Activated CD4-positive, alpha-beta T cell treated with anti-CD3 and anti-CD28 coated beads for 36 hours (primary cell): ENCODE measurements at regions of chr10 and their contacts with region 1.

Region 1: DNA sequence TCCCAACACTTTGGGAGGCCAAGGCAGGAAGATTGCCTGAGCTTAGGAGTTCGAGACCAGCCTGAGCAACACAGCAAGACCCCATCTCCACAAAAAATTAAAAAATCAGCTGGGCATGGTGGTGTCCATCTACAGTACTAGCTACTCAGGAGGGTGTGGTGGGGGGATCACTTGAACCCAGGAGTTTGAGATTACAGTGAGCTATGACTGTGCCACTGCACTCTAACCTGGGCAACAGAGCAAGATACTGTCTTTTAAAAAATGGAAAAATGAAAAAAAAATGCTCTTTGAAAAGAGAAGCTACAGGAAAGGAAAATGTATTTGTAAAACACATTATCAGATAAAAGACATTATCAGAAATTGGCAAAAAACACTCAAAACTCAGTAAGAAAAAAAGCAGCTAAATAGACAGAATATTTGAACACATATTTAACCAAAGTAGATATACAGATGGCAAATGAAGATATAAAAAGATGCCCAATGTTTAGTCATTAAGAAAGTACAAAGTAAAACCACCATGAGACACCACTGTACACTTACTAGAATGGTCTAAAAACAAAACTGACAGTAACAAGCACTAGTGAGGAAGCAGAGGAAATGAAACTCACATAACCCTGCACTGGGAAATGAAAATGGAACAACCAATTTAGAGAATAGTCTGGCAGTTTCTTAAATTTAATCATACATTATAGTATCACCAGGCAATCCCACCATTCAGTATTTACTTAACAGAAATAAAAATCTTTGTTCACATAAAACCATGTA is 40.5 kb downstream of the NRBF2 start:
- DNase-seq: no peak
- ATAC-seq: peak; percentile 96
- H3K4me3 Mint-ChIP-seq: no peak overlapping the region
- H3K27ac Mint-ChIP-seq: peak overlapping the region; percentile 72
- H3K4me1 Mint-ChIP-seq: peaks cover 52% of the 10 kb centered on the region
- H3K27me3 Mint-ChIP-seq: no peaks in the 10 kb centered on the region

Region 2: DNA sequence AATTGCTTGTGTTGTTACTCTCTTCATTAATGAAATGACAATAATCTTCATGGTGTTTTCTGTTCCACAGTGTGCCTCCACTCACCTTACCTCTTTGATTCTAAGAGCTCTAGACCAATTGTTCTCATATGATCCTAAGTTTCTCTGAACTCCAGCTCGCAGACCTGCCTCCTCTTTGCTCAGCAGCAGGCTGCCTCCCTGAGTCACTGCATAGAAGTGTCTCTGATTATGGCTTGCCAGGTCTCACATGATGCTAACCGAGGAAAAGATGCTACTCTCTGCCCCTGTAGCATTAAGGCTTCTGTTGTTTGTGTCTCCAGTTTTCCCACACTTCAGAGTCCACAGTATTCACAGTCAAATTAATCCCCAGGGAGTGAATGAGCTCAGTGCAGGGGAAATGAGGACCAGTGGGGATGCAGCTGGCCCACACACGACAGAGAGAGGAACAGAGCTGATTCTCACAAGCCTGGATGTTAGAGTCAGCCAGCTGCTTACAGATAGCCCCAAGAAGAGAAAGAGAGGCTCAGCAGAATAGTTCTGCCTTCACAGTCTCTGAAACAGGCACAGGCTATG is 211.6 kb before region 1 on chr10:
- CTCF ChIA-PET with region 1: no interaction called
- POLR2A ChIA-PET with region 1: no interaction called
- intact Hi-C with region 1: no loop called
- DNase-seq: no peak
- ATAC-seq: no peak
- H3K4me3 Mint-ChIP-seq: no peak overlapping the region
- H3K27ac Mint-ChIP-seq: no peak overlapping the region
- H3K4me1 Mint-ChIP-seq: no peaks in the 10 kb centered on the region
- H3K27me3 Mint-ChIP-seq: peaks cover 22% of the 10 kb centered on the region

Region 3: GRCh38 chr10:63133056-63133820 is 40.4 kb before region 1 on chr10 and contains the start of gene NRBF2:
- CTCF ChIA-PET with region 1: interaction called, 4 read pairs
- POLR2A ChIA-PET with region 1: no interaction called
- intact Hi-C with region 1: loop called in 1 of 2 experiments (anchors 2 kb)
- DNase-seq: peak; percentile 99
- ATAC-seq: peak; percentile 90
- H3K4me3 Mint-ChIP-seq: peak within 1 kb of the TSS; percentile 81
- H3K27ac Mint-ChIP-seq: peak within 1 kb of the TSS; percentile 92
- H3K4me1 Mint-ChIP-seq: peaks cover 46% of the 10 kb centered on the region
- H3K27me3 Mint-ChIP-seq: no peaks in the 10 kb centered on the region
- total RNA-seq, gene NRBF2: 23.9 to 24.1 TPM

Region 4: DNA sequence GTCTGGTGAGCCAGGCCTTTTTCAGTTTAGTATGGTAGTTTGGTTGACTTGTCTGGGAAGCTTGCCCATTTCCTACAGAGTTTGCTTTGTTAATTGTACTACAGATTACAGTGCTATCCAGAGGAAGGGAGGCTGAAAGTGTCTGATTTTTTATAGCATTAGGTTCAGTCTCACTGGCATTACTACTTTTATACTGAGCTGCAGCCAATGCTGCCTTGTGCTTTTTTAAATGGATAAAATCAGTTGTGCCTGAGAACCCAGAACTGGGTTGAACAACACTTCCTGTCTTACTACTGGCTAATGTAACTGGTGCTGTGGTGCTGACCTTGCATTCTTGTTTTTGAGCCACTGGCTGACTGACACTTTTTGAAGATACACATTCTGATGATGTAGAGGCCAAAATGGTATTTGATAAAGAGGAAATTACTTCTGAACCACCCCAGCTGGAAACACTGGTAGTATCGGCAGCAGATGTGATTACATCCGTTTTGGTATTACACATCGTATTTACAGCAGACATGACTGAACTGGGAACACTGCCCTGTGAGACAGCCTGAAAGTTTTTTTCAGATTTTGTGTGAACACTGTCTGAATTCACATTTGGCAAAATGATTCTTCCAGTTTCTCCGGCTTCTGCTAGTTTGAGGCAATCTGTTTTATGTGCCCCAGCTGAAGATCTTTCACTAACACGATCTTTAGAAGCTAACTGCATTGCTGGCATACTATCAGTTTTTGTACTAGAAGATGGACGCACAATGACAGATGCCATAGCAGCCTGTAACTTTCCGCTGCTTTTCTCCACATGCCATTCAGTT is 33.6 kb after region 1 on chr10:
- CTCF ChIA-PET with region 1: no interaction called
- POLR2A ChIA-PET with region 1: no interaction called
- intact Hi-C with region 1: loop called in 1 of 2 experiments (anchors 2 kb)
- DNase-seq: no peak
- ATAC-seq: peak; percentile 44
- H3K4me3 Mint-ChIP-seq: no peak overlapping the region
- H3K27ac Mint-ChIP-seq: peak overlapping the region; percentile 49
- H3K4me1 Mint-ChIP-seq: peaks cover 58% of the 10 kb centered on the region
- H3K27me3 Mint-ChIP-seq: no peaks in the 10 kb centered on the region

Region 5: GRCh38 chr10:63355682-63356081 is 182.0 kb after region 1 on chr10:
- CTCF ChIA-PET with region 1: no interaction called
- POLR2A ChIA-PET with region 1: no interaction called
- intact Hi-C with region 1: loop called in 1 of 2 experiments (anchors 5 kb)
- DNase-seq: no peak
- ATAC-seq: no peak
- H3K4me3 Mint-ChIP-seq: no peak overlapping the region
- H3K27ac Mint-ChIP-seq: peak overlapping the region; percentile 40
- H3K4me1 Mint-ChIP-seq: peaks cover 34% of the 10 kb centered on the region
- H3K27me3 Mint-ChIP-seq: no peaks in the 10 kb centered on the region

Region 6: DNA sequence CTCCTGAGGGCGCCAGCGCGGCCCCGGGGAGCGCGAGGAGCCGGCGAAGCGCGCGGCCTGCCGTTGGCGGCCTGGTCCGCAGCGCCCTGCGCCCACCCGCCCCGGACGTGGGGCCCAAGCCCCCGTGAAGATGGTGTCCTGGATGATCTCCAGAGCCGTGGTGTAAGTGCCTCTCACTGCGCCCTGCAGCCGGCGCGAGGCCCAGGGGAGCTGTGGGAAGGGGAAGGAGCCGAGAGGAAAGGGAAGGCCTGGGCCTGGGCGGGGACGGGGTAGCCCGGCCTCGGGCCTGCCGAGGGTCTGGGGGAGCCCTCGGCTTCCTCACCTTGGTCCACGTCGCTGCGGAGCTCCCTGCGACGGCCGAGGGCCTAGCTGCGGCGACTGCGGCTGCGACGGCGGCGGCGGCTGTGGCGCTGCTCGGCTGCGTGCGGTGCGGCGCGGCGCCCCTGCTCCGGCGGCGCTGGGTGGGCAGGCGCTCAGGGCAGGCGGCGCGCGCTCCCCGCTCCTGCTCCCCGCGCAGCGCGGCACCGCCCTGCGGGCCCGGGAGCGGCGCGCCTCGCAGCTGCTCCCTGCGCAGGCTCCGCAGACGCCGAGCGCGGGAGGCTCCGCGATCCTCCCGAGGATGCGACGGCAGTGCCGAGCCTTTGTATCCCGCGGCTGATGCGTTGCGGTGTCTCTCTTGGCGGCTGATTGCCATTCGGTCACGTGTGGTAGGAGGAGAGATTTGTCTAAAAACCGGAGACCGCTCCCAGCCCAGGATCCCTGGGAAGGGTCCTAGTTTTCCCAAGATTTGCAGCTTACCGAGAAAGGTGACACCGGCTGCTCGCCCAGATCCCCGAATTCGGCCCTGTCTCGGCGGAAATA is 348.0 kb after region 1 on chr10:
- CTCF ChIA-PET with region 1: no interaction called
- POLR2A ChIA-PET with region 1: no interaction called
- intact Hi-C with region 1: loop called in 1 of 2 experiments (anchors 5 kb)
- DNase-seq: peak; percentile 75
- ATAC-seq: peak; percentile 72
- H3K4me3 Mint-ChIP-seq: peak overlapping the region; percentile 86
- H3K27ac Mint-ChIP-seq: peak overlapping the region; percentile 94
- H3K4me1 Mint-ChIP-seq: peaks cover 57% of the 10 kb centered on the region
- H3K27me3 Mint-ChIP-seq: no peaks in the 10 kb centered on the region